SK-N-SH (cell line): ENCODE measurements at regions of chr4 and their contacts with region 1.

Region 1: DNA sequence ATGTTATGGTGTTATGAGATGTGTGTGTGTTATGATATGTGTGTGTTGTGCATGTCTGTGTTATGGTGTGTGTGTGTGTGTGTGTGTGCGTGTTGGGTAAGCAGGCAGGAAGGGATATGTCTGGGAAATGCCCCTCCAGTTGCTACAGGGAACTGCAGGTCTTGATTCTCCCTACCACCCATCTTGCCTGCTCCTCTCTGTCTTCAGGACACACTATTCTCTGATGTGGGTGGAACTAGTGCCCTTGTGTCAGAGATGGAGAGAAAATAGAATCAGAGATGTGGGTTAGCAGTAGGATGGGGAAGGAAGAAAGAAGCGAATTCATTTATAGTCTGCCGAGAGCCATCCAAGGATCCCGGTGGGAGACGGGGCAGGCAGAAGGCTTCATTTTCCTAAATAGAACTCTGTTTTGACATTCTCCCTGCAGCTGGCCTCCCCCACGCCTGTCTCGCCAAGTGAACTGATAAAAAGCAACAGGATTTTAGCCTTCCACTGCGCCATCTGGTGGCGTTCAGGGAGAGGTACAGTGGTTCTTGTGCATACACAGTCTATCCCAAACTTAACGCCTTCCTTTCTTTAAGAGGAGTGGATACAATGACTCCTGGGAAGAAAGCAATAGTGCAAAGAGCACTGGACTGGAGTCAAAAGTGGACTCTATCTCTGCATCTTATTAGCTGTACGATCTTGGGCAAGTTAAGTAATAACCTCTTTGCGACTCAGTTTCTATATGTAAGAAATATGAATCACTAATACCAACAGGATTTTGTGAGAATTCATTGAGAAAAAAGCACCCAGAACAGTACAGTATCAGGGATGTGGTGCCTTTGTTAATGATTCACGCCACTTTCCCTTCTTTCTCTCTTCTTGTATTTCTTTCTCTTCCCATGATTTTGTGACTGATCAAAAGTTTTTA is 14.1 kb upstream of the MGST2 start:
- DNase-seq: peak; percentile 64
- H3K4me3 ChIP-seq: peak overlapping the region in 1 of 2 experiments; percentile 23; a peak in 1 of 4 replicates
- H3K27ac ChIP-seq: no peak overlapping the region
- H3K4me1 ChIP-seq: peaks cover 0 to 11% of the 10 kb centered on the region in 2 experiments; a peak in 1 of 4 replicates
- H3K27me3 ChIP-seq: no peaks in the 10 kb centered on the region
- CTCF ChIP-seq: peak; percentile 93
- EP300 ChIP-seq: no peak
- RAD21 ChIP-seq: peak; percentile 81

Region 2: GRCh38 chr4:139593091-139593564 is 58.4 kb before region 1 on chr4:
- CTCF ChIA-PET with region 1: interaction called, 11 read pairs
- POLR2A ChIA-PET with region 1: no interaction called
- DNase-seq: no peak
- H3K4me3 ChIP-seq: no peak overlapping the region
- H3K27ac ChIP-seq: no peak overlapping the region
- H3K4me1 ChIP-seq: peaks cover 0 to 15% of the 10 kb centered on the region in 2 experiments; a peak in 2 of 4 replicates
- H3K27me3 ChIP-seq: no peaks in the 10 kb centered on the region
- CTCF ChIP-seq: no peak
- EP300 ChIP-seq: no peak
- RAD21 ChIP-seq: no peak

Region 3: GRCh38 chr4:139609647-139610046 is 41.9 kb before region 1 on chr4:
- CTCF ChIA-PET with region 1: interaction called, 157 read pairs
- POLR2A ChIA-PET with region 1: no interaction called
- DNase-seq: no peak
- H3K4me3 ChIP-seq: no peak overlapping the region
- H3K27ac ChIP-seq: no peak overlapping the region
- H3K4me1 ChIP-seq: peaks cover 0 to 23% of the 10 kb centered on the region in 2 experiments; a peak in 1 of 4 replicates
- H3K27me3 ChIP-seq: no peaks in the 10 kb centered on the region
- CTCF ChIP-seq: no peak; the same call in 1 of the 2 replicates
- EP300 ChIP-seq: no peak
- RAD21 ChIP-seq: no peak

Region 4: DNA sequence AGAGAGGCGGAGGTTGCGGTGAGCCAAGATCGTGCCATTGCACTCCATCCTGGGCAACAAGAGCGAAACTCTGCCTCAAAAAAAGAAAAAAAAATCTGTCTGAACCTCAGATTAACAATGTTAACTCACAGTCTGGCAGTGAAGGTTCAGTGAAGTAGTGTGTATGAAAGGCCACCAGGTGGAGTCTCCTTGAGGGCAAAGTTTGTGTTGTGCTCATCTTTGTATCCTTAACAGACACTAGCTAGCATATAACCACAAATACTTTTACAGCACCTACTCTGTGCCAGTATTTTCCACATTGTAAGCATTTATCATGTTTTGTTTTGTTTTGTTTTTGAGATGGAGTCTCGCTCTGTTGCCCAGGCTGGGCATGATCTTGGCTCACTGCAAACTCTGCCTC is 31.9 kb before region 1 on chr4:
- CTCF ChIA-PET with region 1: interaction called, 23 read pairs
- POLR2A ChIA-PET with region 1: no interaction called
- DNase-seq: no peak
- H3K4me3 ChIP-seq: no peak overlapping the region
- H3K27ac ChIP-seq: no peak overlapping the region
- H3K4me1 ChIP-seq: no peaks in the 10 kb centered on the region
- H3K27me3 ChIP-seq: no peaks in the 10 kb centered on the region
- CTCF ChIP-seq: peak; percentile 49
- EP300 ChIP-seq: no peak
- RAD21 ChIP-seq: peak; percentile 27; the same call in 1 of the 2 replicates

Region 5: DNA sequence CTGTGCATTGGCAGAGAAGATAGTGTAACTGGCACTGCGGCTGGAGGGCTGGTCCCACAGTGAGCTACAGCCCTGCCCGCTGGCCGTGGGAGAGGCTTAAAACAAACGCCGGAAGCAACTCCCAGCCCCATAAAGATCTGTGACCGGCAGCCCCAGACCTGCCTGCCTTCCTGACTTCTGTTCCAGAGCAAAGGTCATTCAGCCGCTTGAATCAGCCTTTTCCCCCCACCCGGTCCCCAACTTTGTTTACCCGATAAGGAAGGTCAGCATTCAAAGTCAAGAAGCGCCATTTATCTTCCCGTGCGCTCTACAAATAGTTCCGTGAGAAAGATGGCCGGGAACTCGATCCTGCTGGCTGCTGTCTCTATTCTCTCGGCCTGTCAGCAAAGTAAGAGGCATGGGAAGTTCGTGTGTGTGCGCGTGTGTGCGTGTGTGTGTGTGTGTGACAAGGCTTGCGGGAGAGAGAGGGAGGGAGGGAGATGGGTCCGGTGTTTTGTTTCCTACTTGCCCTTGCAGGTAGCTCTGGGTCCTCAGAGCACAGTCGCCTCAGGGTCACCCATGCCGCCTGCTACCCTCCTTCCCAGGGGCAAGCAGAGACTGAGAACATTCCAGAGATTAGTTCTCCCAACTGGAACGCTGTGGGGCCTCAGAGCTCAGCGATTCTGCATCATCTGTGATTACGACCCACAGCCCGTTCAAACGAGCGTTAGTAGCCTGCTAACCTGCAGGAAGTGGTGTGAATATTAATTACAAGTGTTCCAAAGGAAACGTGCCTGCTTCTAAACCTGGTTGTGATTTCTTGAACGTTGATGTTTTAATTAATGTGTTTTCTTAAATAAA is 14.4 kb after region 1 on chr4 and contains the start of gene MGST2:
- CTCF ChIA-PET with region 1: interaction called, 77 read pairs
- POLR2A ChIA-PET with region 1: no interaction called
- DNase-seq: peak; percentile 58
- H3K4me3 ChIP-seq: peak within 1 kb of the TSS; percentile 56 to 73
- H3K27ac ChIP-seq: peak within 1 kb of the TSS; percentile 72 to 86
- H3K4me1 ChIP-seq: peaks cover 6 to 14% of the 10 kb centered on the region in 2 experiments; a peak in 2 of 4 replicates
- H3K27me3 ChIP-seq: no peaks in the 10 kb centered on the region
- CTCF ChIP-seq: no peak
- EP300 ChIP-seq: no peak
- RAD21 ChIP-seq: no peak
- polyA plus RNA-seq, gene MGST2: 26.5 and 32.1 TPM in 2 replicates